ENCODE measurements at regions of chr14 and their contacts with region 1.

Region 1: DNA sequence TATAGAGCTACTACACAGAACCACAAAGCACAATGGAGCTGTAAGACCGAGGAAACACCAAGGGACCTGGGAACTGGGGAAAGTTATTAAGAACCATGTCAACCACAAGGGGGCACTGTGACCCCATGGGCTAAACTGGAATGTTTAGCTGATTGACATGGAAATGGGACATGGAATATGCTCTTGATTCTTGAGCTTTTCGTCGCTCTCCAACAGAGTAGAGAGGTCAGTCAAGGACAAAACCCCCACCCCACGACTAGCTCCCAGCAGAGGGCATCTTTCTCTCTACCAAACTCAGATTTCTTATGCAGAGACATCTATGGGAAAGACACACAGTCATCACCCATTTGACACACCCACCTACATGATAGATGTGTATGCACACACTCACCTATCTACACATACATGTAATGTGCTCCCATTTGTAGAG is 10.1 kb downstream of the NDRG2 start:
- DNase-seq: no peak
- ATAC-seq: peak; percentile 80

Region 2: DNA sequence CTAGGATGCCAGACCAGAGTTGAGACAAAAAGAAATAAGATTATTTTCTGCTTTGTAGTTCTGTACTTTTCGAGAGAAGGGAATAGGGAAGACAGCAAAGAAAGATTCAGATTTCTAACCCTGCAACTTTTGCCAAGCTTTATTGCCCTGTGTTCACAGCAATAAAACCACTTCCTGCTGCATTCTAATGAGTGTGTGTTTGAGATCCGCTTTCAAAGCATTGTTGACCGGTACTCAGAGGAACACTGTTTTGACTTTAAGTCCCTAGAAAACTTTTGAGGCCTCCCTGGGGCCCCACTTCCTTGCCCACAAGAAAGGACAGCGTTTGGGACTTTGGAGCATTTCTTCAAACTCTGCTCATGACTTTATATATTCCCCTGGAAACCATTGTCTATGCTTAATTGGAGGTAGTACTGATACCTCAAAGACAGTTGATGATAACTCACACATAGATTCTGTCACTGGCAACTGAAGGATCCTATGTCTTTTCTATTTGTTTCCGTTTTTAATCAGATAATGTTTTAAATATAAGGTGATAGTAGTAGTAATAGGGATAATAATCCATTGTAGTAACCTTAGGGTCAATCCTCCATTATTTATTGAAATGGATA is 232.4 kb before region 1 on chr14:
- intact Hi-C with region 1: no loop called
- DNase-seq: no peak
- ATAC-seq: peak; percentile 66

Region 3: GRCh38 chr14:21092273-21093011 is 77.7 kb after region 1 on chr14:
- intact Hi-C with region 1: loop called (anchors 2 kb)
- DNase-seq: peak; percentile 94
- ATAC-seq: peak; percentile 88

Region 4: GRCh38 chr14:21103710-21104447 is 89.1 kb after region 1 on chr14:
- intact Hi-C with region 1: loop called (anchors 2 kb)
- DNase-seq: peak; percentile 97
- ATAC-seq: peak; percentile 96